OCI-LY7 (cell line): ENCODE measurements at regions of chr7 and their contacts with region 1.

Region 1: DNA sequence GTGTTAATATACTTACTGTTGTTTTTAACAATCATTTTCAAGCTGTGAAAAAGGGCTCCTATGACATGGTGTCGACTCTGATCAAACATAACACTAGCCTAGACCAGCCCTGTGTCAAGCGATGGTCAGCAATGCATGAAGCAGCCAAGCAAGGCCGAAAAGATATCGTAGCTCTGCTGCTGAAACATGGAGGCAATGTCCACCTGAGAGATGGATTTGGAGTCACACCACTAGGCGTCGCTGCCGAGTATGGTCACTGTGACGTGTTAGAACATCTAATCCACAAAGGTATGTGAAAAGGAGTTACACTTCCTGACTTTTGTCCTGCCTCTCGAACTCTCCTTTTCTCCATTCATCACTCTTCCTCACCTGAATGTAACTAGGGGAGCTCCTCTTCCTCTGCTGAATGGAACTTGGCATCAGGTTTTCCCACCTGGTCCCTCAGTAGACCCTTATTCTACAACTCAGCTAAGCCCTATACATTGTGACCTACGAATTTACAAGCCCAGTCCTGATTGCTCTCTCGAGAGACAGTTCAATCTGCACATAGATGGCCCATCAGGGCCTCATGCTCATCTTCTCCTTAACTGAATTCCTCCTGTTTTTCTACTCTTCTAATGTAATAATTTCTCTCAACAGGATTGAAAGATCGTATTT is 23.0 kb downstream of the ASB15 start:
- DNase-seq: peak; percentile 67
- H3K4me3 ChIP-seq: no peak overlapping the region
- H3K27ac ChIP-seq: no peak overlapping the region
- H3K4me1 ChIP-seq: no peaks in the 10 kb centered on the region
- CTCF ChIP-seq: peak; percentile 88

Region 2: GRCh38 chr7:123608991-123609882 is 15.4 kb before region 1 on chr7:
- CTCF ChIA-PET with region 1: no interaction called
- POLR2A ChIA-PET with region 1: interaction called, 12 read pairs
- intact Hi-C with region 1: no loop called
- DNase-seq: no peak
- H3K4me3 ChIP-seq: no peak overlapping the region
- H3K27ac ChIP-seq: no peak overlapping the region
- H3K4me1 ChIP-seq: no peaks in the 10 kb centered on the region
- CTCF ChIP-seq: no peak

Region 3: DNA sequence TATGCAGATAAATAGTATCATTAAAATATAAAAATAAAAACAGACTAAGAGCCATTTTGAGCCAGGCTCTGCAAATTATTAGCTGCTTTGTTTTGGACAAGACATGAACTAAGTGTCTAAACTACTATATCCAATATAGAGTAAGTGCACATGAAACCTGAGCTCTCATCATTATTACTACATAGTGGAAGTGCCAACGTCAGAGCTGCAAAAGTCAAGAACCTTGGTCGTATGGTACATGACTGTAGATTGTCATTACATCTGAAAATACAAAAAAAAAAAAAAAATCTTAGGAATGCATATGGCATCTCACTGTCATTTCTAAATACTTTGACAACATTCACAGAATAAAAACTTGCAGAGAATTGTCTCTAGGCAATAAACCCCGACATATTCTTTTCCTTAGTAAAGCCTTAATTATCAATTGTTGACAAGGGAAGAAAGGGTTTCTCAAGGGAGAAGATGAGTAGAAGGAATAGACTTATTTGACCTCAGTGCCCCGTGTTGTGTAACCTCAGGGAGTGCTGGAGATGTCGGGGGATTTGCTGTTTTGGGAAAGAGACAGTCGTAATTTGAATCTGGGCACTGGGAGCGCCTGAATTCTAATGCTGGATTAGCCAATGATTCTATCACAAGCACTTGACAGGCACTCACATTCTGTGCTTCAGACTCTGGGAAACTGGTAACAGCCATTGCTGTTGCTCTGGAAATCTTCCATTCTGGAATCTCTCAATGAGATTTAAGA is 17.1 kb after region 1 on chr7:
- CTCF ChIA-PET with region 1: no interaction called
- POLR2A ChIA-PET with region 1: no interaction called
- intact Hi-C with region 1: no loop called
- DNase-seq: no peak
- H3K4me3 ChIP-seq: no peak overlapping the region
- H3K27ac ChIP-seq: no peak overlapping the region
- H3K4me1 ChIP-seq: no peaks in the 10 kb centered on the region
- CTCF ChIP-seq: no peak